ENCODE measurements at regions of chr17 and their contacts with region 1.

Region 1: DNA sequence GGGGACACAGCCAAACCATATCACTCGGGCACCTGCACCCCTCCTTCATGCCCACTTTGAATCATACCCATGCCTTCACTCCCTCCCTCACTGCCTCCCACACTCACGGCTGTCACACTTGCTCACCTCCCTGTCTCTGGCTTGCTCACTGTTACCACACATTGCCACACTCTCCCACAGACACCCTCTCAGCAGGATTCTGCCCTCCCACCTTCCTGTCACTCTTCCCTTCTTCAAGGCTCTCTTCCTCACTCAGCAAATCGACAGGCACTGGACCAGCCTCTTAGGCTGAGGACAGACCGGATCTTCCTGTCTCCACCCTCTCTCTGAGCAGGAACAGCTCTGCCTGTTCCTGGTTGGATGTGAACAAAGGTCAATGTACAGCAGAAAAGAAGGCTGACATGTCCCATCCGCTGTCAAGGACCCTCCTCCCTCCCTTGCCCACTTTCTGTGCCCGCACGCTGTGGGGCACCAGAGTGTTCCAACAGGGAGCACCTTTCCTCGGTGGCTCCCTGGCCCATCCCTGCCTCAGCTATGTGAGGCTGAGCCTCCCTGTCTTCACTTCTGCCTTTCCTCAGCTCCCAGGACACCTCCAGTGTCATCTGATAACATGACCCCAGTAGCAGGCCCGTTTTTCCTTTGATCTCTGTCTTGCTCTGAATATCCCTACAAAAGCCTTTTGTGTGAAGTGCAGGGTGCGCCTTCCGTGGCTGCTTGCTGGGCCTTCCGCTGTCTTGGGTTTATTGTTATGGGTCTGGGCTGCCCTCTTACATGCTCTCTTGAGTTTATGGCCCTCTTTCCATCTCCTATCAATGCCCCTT is 47.0 kb downstream of the CCDC182 start:
- DNase-seq: no peak
- ATAC-seq: no peak
- H3K4me3 ChIP-seq: no peak overlapping the region
- H3K27ac ChIP-seq: no peak overlapping the region
- H3K4me1 ChIP-seq: peaks cover 0 to 9% (median 0%) of the 10 kb centered on the region in 12 donors
- H3K27me3 ChIP-seq: no peaks in the 10 kb centered on the region
- CTCF ChIP-seq: no peak
- POLR2A ChIP-seq: no peak

Region 2: GRCh38 chr17:57158296-57158695 is 539.8 kb before region 1 on chr17:
- intact Hi-C with region 1: loop called in 1 of 10 experiments (anchors 10 kb)
- DNase-seq: no peak
- ATAC-seq: no peak
- H3K4me3 ChIP-seq: no peak overlapping the region
- H3K27ac ChIP-seq: no peak overlapping the region
- H3K4me1 ChIP-seq: no peaks in the 10 kb centered on the region
- H3K27me3 ChIP-seq: no peaks in the 10 kb centered on the region
- CTCF ChIP-seq: no peak
- POLR2A ChIP-seq: no peak